Activated CD4-positive, alpha-beta T cell treated with anti-CD3 and anti-CD28 coated beads for 36 hours (primary cell): ENCODE measurements at regions of chr1 and their contacts with region 1.

Region 1: GRCh38 chr1:171841050-171841940 is at the start of gene DNM3:
- DNase-seq: peak; percentile 85
- ATAC-seq: peak; percentile 97
- H3K4me3 Mint-ChIP-seq: peak within 1 kb of the TSS; percentile 84
- H3K27ac Mint-ChIP-seq: peak within 1 kb of the TSS; percentile 77
- H3K4me1 Mint-ChIP-seq: peaks cover 14% of the 10 kb centered on the region
- H3K27me3 Mint-ChIP-seq: peaks cover 17% of the 10 kb centered on the region
- total RNA-seq, gene DNM3: 1.1 to 1.4 TPM

Region 2: DNA sequence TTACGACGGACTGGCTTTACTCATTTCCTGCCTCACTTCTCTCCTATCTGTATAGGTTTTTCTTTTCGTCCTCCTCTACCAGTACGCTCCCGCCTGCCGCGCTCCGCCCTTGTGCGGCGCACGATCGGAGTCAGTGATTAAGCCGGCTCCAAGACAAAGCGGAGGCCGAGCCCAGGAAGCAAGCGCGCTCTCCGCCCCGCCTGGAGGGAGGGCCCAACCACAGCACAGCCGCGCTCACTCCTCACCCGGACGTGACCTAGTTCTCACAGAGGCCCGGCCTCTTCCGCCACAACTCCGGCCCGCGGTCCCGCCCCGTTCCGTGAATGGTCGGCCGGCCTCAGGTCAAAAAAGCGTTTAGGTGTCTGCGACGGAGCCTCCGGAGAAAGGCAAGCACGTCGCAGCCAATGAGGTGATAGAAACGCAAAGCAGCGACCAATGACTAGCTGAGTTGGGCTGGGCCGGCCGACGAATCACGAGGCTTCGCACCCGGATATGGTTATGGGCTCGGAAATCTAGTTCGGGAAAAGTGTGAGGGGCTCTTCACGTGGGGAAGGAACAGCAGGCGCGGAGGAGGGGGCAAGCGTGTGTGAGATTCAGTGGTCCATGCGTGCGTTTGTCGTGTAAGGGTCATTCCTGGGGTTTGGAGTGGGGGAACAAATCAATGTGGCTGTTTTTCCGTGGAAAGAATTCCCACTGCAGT is 60.0 kb before region 1 on chr1 and contains the start of gene METTL13:
- CTCF ChIA-PET with region 1: no interaction called
- POLR2A ChIA-PET with region 1: no interaction called
- intact Hi-C with region 1: loop called (anchors 1 to 2 kb)
- DNase-seq: peak; percentile 99
- ATAC-seq: peak; percentile 97
- H3K4me3 Mint-ChIP-seq: peak within 1 kb of the TSS; percentile 92
- H3K27ac Mint-ChIP-seq: peak within 1 kb of the TSS; percentile 97
- H3K4me1 Mint-ChIP-seq: peaks cover 57% of the 10 kb centered on the region
- H3K27me3 Mint-ChIP-seq: no peaks in the 10 kb centered on the region
- total RNA-seq, gene METTL13: 41.1 to 52.9 TPM

Region 3: DNA sequence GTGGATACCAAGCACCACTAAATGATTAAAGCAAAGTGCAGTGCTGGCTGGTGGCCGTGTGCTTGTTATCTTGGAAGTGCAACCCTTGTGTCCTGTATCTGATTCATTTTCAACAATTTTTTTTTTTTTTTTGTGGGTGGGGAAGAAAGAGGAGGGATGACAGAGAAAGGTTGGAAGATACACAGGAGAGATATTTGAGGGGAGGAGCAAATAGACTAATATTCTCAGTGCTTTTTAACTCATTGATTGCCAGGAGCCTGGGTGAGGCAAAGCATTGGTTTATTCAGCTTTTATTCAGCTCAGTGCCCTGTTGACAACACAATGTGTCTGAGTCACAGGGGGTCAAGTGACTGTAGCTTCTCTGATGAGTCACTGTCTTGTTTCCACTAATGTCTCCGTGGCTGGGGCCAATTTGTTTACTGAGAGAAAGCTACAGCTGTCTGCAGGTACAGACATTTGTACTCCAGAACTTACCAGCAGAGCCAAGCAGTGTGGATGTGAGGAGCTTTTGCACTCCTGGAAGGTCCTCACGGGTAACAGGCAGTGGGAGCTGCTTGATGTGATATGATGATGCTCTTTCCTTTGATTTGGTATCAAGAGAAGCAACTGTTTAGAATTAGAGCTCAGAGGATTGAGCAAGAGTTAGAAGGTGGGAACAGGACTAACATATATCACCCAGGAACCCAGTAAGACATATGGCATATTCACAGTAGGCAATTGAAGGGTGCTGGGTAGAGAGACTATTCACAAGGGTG is 23.6 kb before region 1 on chr1:
- CTCF ChIA-PET with region 1: interaction called, 3 read pairs
- POLR2A ChIA-PET with region 1: no interaction called
- intact Hi-C with region 1: loop called in 1 of 2 experiments (anchors 1 kb)
- DNase-seq: peak; percentile 73
- ATAC-seq: peak; percentile 98
- H3K4me3 Mint-ChIP-seq: no peak overlapping the region
- H3K27ac Mint-ChIP-seq: peak overlapping the region; percentile 87
- H3K4me1 Mint-ChIP-seq: peaks cover 17% of the 10 kb centered on the region
- H3K27me3 Mint-ChIP-seq: no peaks in the 10 kb centered on the region

Region 4: GRCh38 chr1:171919891-171920887 is 78.9 kb after region 1 on chr1:
- CTCF ChIA-PET with region 1: no interaction called
- POLR2A ChIA-PET with region 1: no interaction called
- intact Hi-C with region 1: no loop called
- DNase-seq: no peak
- ATAC-seq: no peak
- H3K4me3 Mint-ChIP-seq: no peak overlapping the region
- H3K27ac Mint-ChIP-seq: no peak overlapping the region
- H3K4me1 Mint-ChIP-seq: peaks cover 2% of the 10 kb centered on the region
- H3K27me3 Mint-ChIP-seq: no peaks in the 10 kb centered on the region

Region 5: DNA sequence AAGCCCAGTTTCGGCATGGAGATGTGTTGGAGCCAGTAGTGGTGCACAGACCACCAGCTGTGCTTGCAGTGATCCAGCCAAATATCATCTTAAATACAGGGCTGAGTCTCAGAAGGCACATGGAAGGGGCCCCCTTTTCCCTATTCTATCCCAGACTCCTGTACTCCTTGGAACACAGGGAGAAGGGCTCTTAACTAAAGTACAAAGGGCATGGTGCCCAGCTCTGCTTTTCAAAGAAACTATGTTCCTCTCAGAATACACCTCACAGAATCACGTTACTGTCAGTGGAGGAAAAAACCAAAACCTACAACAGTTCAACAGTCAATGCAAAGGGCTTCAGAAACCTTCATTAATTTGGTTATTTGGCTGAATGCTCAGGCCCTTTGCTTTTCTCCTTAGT is 398.6 kb after region 1 on chr1:
- CTCF ChIA-PET with region 1: no interaction called
- POLR2A ChIA-PET with region 1: no interaction called
- intact Hi-C with region 1: no loop called
- DNase-seq: no peak
- ATAC-seq: no peak
- H3K4me3 Mint-ChIP-seq: no peak overlapping the region
- H3K27ac Mint-ChIP-seq: no peak overlapping the region
- H3K4me1 Mint-ChIP-seq: no peaks in the 10 kb centered on the region
- H3K27me3 Mint-ChIP-seq: no peaks in the 10 kb centered on the region